CD4-positive, alpha-beta memory T cell (primary cell): ENCODE measurements at regions of chr19 and their contacts with region 1.

Region 1: DNA sequence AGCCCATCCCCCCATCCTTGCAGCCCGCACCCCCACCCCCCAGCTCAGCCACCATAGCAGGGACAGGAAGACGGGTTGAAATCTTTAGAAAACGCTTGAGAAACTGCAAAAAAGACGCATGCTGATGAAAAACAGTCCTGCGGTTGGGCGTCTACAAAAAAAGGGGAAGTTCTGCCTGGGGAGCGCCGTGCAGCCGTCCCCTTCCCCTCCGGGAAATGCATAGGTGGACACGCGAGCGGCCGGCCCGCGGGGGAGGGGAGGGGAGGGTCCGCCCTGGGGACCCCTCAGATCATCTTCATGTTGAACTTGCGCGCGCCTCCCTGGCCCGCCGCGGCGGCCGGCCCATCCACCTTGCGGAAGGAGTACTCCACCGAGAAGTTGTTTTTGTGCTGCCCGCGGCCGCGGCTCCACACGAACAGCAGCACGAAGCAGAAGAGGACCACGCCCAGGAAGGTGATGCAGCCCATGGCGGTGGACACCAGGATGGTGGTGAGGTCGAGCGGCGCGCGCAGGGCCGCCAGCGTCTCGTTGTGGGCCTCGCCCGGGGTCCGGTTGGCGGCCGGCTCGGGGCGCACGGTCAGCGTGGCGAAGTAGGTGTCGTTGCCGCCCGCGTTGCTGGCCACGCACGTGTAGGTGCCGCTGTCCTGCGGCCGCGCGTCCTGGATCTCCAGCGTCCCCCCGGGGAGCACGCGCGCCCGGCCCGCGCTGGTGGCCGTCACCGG is 7.9 kb upstream of the PEAK3 start:
- DNase-seq: peak; percentile 60 to 73 (median 65)
- H3K4me3 ChIP-seq: peak overlapping the region in 1 of 2 donors; percentile 67
- H3K4me3 Mint-ChIP-seq: peak overlapping the region; percentile 87 to 94 (median 90)
- H3K27ac ChIP-seq: peak overlapping the region; percentile 39
- H3K27ac Mint-ChIP-seq: peak overlapping the region; percentile 70 to 94 (median 86)
- H3K4me1 ChIP-seq: peaks cover 24% of the 10 kb centered on the region
- H3K4me1 Mint-ChIP-seq: peaks cover 10 to 39% (median 24%) of the 10 kb centered on the region in 4 donors
- H3K27me3 ChIP-seq: no peaks in the 10 kb centered on the region
- H3K27me3 Mint-ChIP-seq: peaks cover 0 to 2% of the 10 kb centered on the region in 2 donors

Region 2: DNA sequence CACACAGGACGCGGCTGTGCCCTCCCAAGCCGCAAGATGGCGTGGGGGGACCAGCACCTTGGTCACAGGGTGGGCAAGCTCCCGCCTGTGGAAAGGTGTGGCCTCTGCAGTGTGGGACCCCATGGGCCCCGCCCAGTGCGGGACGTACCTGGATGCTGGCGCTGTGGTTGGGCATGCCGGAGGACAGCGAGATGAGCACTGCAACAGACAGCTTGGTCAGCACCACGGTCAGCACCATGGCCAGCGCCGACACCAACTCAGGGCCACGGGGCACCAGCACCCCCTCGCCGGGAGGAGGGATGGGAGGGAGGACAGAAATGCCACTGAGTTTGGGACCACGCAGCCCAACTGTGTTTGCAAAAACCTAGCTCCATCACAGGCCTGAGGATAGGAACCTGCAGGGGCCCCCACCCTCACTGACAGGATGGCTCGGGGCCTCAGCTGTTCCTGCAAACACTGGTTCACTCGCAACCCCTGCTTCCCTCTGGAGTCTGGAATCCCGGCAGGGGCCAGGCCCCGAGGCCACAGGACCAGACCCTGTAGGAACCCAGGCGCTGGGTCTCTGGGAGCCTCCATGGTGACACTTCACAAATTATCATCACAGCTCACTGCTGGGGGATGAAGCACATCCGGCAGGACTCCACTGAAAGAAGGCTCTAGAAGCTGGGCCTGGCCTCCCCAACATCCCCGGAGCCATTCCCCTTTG is 166.0 kb before region 1 on chr19:
- CTCF ChIA-PET with region 1: no interaction called
- POLR2A ChIA-PET with region 1: no interaction called
- intact Hi-C with region 1: no loop called
- DNase-seq: no peak
- H3K4me3 ChIP-seq: no peak overlapping the region
- H3K4me3 Mint-ChIP-seq: no peak overlapping the region
- H3K27ac ChIP-seq: no peak overlapping the region
- H3K27ac Mint-ChIP-seq: no peak overlapping the region
- H3K4me1 ChIP-seq: no peaks in the 10 kb centered on the region
- H3K4me1 Mint-ChIP-seq: peaks cover 0 to under 1% (median 0%) of the 10 kb centered on the region in 4 donors
- H3K27me3 ChIP-seq: no peaks in the 10 kb centered on the region
- H3K27me3 Mint-ChIP-seq: no peaks in the 10 kb centered on the region

Region 3: GRCh38 chr19:2221918-2222317 is 68.0 kb before region 1 on chr19:
- CTCF ChIA-PET with region 1: no interaction called
- POLR2A ChIA-PET with region 1: no interaction called
- intact Hi-C with region 1: no loop called
- DNase-seq: no peak
- H3K4me3 ChIP-seq: no peak overlapping the region
- H3K4me3 Mint-ChIP-seq: no peak overlapping the region
- H3K27ac ChIP-seq: no peak overlapping the region
- H3K27ac Mint-ChIP-seq: no peak overlapping the region
- H3K4me1 ChIP-seq: no peaks in the 10 kb centered on the region
- H3K4me1 Mint-ChIP-seq: peaks cover 0 to 7% (median 2%) of the 10 kb centered on the region in 4 donors
- H3K27me3 ChIP-seq: no peaks in the 10 kb centered on the region
- H3K27me3 Mint-ChIP-seq: no peaks in the 10 kb centered on the region

Region 4: DNA sequence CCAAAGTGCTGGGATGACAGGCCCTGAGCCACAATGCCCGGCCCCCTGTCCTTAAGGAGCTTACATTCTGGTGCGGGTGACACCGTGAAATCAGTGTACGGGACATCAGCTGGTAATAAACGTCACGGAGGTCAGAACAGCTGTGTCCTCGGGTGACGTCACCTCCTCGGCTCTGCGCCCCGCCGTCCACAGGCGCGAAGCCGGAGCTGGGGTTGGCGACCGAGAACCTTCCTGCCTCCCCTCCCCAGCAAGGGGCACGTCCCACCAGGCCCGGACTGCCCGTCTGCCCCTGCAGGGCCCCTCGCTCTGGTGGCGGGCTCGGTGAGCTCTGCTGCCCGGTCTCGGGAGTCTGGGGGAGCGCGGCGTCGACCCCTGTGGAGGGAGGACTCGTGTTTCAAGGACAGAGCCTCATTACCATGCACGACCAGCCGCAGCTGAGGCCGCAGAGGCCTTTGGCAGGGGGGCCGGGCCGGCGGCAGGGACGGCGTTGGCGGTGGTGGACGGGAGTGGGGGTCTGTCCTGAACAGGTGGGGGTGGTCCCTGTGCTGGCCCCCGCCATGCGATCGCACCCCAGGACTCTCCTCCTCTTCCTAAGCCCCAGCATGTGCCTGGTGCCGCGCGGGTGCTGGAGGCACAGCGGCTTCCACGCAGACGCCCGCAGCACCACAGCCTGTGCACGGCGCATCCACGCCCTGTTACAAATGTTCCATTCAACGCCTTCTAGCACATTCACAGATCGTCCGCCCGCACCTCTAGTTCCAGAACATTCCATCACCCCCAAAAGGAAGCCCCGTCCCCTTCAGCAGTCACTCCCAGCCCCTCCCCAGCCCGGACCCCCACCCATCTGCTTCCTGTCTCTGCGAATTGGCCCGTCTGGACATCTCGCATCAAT is 12.7 kb after region 1 on chr19:
- CTCF ChIA-PET with region 1: interaction called, 4 read pairs
- POLR2A ChIA-PET with region 1: interaction called, 10 read pairs
- intact Hi-C with region 1: no loop called
- DNase-seq: peak in 1 of 5 donors; percentile 21
- H3K4me3 ChIP-seq: no peak overlapping the region
- H3K4me3 Mint-ChIP-seq: peak overlapping the region in 7 of 8 donors; percentile 48 to 80 (median 65)
- H3K27ac ChIP-seq: no peak overlapping the region
- H3K27ac Mint-ChIP-seq: peak overlapping the region in 1 of 7 donors; percentile 57
- H3K4me1 ChIP-seq: peaks cover 9% of the 10 kb centered on the region
- H3K4me1 Mint-ChIP-seq: peaks cover 2 to 19% (median 9%) of the 10 kb centered on the region in 4 donors
- H3K27me3 ChIP-seq: peaks cover 19% of the 10 kb centered on the region
- H3K27me3 Mint-ChIP-seq: peaks cover 10 to 24% of the 10 kb centered on the region in 2 donors

Region 5: GRCh38 chr19:2345794-2346663 is 56.2 kb after region 1 on chr19:
- CTCF ChIA-PET with region 1: no interaction called
- POLR2A ChIA-PET with region 1: no interaction called
- intact Hi-C with region 1: no loop called
- DNase-seq: no peak
- H3K4me3 ChIP-seq: no peak overlapping the region
- H3K4me3 Mint-ChIP-seq: no peak overlapping the region
- H3K27ac ChIP-seq: no peak overlapping the region
- H3K27ac Mint-ChIP-seq: peak overlapping the region in 2 of 7 donors; percentile 11 to 25
- H3K4me1 ChIP-seq: no peaks in the 10 kb centered on the region
- H3K4me1 Mint-ChIP-seq: no peaks in the 10 kb centered on the region
- H3K27me3 ChIP-seq: no peaks in the 10 kb centered on the region
- H3K27me3 Mint-ChIP-seq: no peaks in the 10 kb centered on the region